Endothelial cell of umbilical vein (primary cell): ENCODE measurements at regions of chr21 and their contacts with region 1.

Region 1: DNA sequence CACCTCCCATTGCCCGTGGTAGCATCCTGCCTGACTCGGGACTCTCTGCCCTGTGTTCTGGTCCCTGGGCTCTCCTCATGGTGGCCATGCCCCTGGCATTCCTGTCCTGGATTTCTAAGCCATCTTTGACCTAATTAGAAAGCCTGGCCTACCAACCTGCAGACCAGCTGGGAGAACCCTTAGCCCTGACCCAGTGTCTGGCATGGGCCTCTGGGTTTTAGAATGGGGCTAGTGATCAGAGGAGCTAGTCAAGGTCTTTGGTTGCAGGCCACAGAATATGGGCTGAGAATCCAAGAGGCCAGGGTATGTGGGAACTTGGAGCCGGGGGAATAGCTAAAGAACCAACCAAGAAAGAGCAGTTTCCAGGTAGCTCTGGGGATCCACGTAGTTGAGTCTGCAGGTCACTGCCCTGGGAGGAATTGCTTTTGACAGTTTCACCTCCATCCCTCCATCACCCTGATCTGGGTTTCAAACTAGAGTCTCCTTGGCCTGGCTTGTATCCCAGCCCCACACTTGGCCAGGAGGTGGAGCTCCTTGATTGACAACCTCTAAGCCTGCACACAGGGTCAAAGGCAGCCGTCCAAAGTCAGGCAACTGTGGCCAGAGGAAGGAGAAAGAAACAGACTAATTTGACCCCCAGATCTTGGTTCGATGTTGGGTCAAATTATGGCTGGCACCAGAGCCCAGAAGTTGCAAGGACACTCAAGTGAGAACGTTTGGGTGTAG is 54.7 kb upstream of the ABCG1 start:
- DNase-seq: peak; percentile 53
- H3K4me3 ChIP-seq: no peak overlapping the region
- H3K27ac ChIP-seq: no peak overlapping the region
- H3K4me1 ChIP-seq: no peaks in the 10 kb centered on the region
- H3K27me3 ChIP-seq: no peaks in the 10 kb centered on the region
- CTCF ChIP-seq: peak; percentile 64 to 72
- POLR2A ChIP-seq: no peak

Region 2: GRCh38 chr21:42199488-42200458 is 35.5 kb after region 1 on chr21:
- CTCF ChIA-PET with region 1: no interaction called
- POLR2A ChIA-PET with region 1: no interaction called
- dilution Hi-C with region 1: no loop called
- intact Hi-C with region 1: loop called (anchors 5 kb)
- DNase-seq: peak; percentile 82
- H3K4me3 ChIP-seq: no peak overlapping the region
- H3K27ac ChIP-seq: peak overlapping the region; percentile 59
- H3K4me1 ChIP-seq: peaks cover 18% of the 10 kb centered on the region
- H3K27me3 ChIP-seq: no peaks in the 10 kb centered on the region
- CTCF ChIP-seq: no peak
- POLR2A ChIP-seq: no peak

Region 3: DNA sequence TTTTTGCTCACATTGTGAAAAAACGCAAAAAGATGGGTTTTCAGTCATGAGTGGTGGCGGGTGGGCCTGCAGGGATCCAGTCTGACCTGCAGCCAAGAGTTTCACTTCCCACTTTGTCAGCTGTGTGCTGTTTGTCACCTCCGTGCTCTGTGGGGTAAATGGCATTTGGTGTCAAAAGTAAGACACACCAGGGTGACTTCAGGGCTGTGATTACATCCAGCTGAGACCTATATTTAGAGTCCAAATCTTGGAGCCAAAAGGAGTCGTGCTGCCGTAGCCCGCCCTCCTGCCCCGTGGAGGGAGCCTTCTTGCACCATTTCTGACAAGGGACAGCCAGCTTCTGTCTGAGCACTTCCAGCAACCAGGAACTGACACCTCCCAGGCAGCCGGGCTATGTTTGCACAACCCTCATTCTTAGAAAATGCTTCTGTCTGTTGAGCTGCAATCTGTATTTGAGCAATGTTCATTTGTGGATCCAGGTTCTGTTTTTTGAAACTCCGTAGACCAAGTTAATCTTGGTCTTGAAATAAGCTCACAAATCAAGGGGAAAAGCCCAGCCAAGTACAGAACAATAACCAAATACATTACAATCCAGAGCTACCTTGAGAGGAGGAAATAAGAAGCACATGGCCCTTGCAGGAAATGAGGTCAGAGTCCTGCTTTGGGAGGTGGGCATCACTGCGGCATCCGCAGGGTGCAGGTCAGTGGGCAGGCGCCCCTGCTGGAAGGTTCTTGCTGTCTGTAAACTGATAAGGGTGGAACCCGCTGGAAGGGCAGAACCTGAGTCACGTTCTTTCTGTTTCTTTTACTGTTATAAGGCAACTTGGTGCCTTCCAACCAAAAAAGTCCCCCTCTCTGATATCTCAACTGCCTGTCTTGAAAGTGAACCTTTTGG is 69.1 kb after region 1 on chr21:
- CTCF ChIA-PET with region 1: interaction called, 6 read pairs
- POLR2A ChIA-PET with region 1: no interaction called
- dilution Hi-C with region 1: no loop called
- intact Hi-C with region 1: loop called (anchors 1 kb)
- DNase-seq: peak; percentile 86
- H3K4me3 ChIP-seq: no peak overlapping the region
- H3K27ac ChIP-seq: peak overlapping the region; percentile 74
- H3K4me1 ChIP-seq: peaks cover 32% of the 10 kb centered on the region
- H3K27me3 ChIP-seq: peaks cover 0 to 5% of the 10 kb centered on the region in 2 experiments
- CTCF ChIP-seq: peak; percentile 37 to 39
- POLR2A ChIP-seq: no peak

Region 4: DNA sequence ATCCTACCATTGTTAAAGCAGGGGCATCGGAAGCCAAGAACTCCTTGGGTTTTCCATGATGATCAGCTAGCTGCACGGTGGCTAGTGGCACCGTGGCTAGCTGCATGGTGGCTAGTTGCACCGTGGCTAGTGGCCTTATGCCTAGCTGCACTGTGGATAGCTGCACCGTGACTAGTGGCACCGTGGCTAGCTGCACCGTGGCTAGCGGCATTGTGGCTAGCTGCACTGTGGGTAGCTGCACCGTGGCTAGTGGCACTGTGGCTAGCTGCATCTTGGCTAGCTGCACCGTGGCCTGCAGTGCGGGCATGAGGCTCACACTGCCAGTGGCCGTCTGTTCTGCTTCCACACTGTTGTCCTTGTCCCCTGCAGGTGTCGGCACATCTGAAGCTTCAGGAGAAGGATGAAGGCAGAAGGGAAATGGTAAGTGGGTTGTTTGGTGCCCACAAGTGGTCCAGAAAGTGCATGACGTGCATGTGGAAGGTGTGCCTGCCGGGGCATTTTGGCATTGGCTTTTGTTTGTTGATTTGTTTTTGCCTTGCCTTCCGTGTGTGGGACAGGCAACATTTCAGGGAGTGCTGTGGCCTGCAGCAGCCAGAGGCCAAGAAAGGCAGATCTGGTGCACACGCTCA is 112.4 kb after region 1 on chr21:
- CTCF ChIA-PET with region 1: interaction called, 5 read pairs
- POLR2A ChIA-PET with region 1: no interaction called
- dilution Hi-C with region 1: no loop called
- intact Hi-C with region 1: loop called (anchors 1 kb)
- DNase-seq: no peak
- H3K4me3 ChIP-seq: no peak overlapping the region
- H3K27ac ChIP-seq: no peak overlapping the region
- H3K4me1 ChIP-seq: peaks cover 12% of the 10 kb centered on the region
- H3K27me3 ChIP-seq: no peaks in the 10 kb centered on the region
- CTCF ChIP-seq: peak in 1 of 2 donors; percentile 17
- POLR2A ChIP-seq: no peak

Region 5: DNA sequence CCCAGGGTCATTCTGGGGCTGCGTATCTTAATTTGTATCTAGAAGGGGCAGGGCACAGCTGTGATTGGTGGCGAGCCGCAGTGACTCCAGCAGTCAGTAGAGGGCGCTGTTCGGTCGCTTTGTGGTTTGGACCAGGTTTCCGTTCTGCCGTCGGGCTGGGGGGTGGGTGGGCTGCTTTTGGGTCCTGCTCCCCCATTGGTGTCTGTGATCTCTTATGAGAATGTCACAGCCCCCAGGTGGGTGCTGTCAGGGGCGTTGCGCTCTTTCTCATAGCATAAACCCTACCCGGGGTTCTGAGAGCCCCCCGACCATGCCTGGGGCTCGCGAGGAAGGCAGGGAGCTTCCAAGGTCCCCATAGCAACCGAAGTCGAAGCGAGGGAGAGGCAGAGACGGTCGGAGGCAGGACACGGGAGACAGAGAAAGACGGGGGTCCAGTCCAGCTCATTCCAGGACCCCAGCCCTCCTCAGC is 145.6 kb after region 1 on chr21:
- CTCF ChIA-PET with region 1: interaction called, 10 read pairs
- POLR2A ChIA-PET with region 1: no interaction called
- dilution Hi-C with region 1: no loop called
- intact Hi-C with region 1: no loop called
- DNase-seq: peak; percentile 30
- H3K4me3 ChIP-seq: no peak overlapping the region
- H3K27ac ChIP-seq: no peak overlapping the region
- H3K4me1 ChIP-seq: no peaks in the 10 kb centered on the region
- H3K27me3 ChIP-seq: peaks cover 2 to 6% of the 10 kb centered on the region in 2 experiments
- CTCF ChIP-seq: peak; percentile 71 to 88
- POLR2A ChIP-seq: no peak

Region 6: DNA sequence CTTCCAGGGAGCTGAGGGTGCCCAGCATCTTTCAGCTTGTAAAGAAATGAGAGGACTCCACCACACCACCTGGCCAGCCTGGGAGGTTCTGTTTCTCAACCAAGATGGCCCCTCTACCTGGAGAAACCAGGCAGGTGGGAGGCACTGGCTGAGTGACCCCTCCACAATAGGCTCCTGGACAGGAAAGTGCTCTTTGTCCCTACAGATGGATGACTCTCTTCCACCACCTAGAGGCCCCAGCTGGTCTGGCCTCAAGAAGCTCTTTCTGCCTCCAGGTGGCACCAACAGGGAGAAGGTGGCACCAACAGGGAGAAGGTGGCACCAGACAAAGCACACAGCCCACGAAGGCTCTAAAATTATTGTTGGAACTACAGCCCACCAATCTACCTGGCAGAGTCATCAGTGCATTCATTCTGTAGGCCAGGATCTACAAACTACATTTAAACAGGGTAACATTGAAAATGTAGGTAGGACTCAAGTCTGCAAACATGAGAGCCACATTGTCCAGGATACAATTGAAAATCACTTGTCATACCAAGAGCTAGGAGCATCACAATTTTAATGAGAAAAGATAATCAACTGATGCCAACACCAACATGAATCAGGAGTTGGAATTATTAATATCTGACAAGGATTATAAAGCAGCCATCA is 217.2 kb after region 1 on chr21:
- CTCF ChIA-PET with region 1: interaction called, 14 read pairs
- POLR2A ChIA-PET with region 1: no interaction called
- dilution Hi-C with region 1: no loop called
- intact Hi-C with region 1: loop called (anchors 1 kb)
- DNase-seq: peak; percentile 31
- H3K4me3 ChIP-seq: no peak overlapping the region
- H3K27ac ChIP-seq: no peak overlapping the region
- H3K4me1 ChIP-seq: no peaks in the 10 kb centered on the region
- H3K27me3 ChIP-seq: no peaks in the 10 kb centered on the region
- CTCF ChIP-seq: peak; percentile 68 to 69
- POLR2A ChIP-seq: no peak

Region 7: DNA sequence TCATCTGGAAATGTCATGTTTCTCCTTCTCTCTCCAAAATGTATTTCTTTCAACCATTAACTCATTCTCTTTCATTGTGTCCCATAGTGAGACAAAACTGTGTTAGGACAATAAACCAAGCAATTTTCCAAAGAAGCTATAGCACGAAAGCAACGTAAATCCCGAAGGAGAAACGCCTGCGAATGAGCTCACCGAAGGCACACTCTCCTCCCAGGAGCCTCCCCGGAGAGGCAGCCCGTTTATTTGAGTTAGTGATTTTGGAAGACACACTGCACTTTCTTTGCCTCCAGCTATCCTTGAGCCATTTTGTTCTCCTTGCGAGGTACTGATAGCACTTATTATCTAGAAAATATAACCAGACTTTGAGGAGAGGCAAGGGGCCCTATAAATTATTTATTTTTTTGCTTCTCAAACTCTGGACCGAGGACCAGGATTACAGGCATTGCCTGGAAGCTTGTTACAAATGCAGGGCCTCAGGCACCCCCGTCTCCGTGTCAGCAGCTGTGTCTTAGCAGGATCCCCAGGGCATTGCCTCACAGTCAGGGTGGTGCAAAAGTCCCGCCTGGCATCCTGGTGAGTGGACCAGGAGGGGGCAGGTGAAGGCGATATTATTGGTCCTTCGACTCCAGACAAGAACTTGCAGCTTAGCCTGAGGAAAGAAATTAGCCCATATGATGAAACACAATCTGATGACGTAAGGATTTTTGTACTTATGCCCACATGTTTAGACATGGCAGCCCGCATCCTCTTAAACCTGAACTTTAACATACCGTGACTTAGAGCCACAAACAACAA is 290.8 kb after region 1 on chr21:
- CTCF ChIA-PET with region 1: no interaction called
- POLR2A ChIA-PET with region 1: no interaction called
- dilution Hi-C with region 1: no loop called
- intact Hi-C with region 1: loop called (anchors 1 kb)
- DNase-seq: no peak
- H3K4me3 ChIP-seq: no peak overlapping the region
- H3K27ac ChIP-seq: no peak overlapping the region
- H3K4me1 ChIP-seq: no peaks in the 10 kb centered on the region
- H3K27me3 ChIP-seq: peaks cover 2 to 5% of the 10 kb centered on the region in 2 experiments
- CTCF ChIP-seq: no peak
- POLR2A ChIP-seq: no peak